Upper lobe of right lung (tissue), 1 donor: ENCODE measurements at regions of chr17 and their contacts with region 1.

Region 1: DNA sequence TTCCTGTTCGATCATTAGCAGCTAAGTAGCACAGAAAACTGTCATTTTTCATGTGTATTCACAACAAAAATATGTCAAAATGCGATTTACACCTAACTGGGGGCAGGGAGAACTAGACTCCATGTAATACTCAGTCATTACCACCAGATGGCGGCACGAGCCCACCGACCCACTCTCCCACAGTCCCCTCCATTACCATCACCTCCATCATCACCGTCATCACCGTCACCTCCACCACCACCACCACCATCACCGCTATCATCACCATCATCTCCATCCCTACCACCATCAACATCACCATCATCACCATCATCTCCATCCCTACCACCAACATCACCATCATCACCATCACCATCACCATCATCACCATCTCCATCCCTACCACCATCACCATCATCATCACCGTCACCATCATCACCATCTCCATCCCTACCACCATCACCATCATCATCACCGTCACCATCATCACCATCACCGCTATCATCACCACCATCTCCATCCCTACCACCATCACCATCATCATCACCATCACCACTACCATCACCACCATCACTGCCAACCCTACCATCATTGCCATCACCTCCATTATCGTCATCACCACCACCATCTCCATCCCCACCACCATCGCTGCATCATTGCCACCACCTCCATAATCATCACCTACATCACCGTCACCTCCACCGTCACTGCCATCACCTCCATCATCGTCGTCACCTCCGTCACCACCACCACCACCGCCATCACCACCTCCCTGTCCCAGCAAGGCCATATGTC is 14.4 kb downstream of the NDUFAF8 start:
- DNase-seq: no peak
- ATAC-seq: peak; percentile 62
- H3K4me3 ChIP-seq: no peak overlapping the region
- H3K27ac ChIP-seq: no peak overlapping the region
- H3K4me1 ChIP-seq: peaks cover 14% of the 10 kb centered on the region
- H3K27me3 ChIP-seq: no peaks in the 10 kb centered on the region
- CTCF ChIP-seq: peak; percentile 77

Region 2: GRCh38 chr17:81315129-81315884 is 61.8 kb after region 1 on chr17:
- intact Hi-C with region 1: no loop called
- DNase-seq: no peak
- ATAC-seq: no peak
- H3K4me3 ChIP-seq: no peak overlapping the region
- H3K27ac ChIP-seq: no peak overlapping the region
- H3K4me1 ChIP-seq: peaks cover under 1% of the 10 kb centered on the region
- H3K27me3 ChIP-seq: no peaks in the 10 kb centered on the region
- CTCF ChIP-seq: no peak

Region 3: GRCh38 chr17:81484195-81484979 is 230.8 kb after region 1 on chr17:
- intact Hi-C with region 1: loop called (anchors 10 kb)
- DNase-seq: peak; percentile 95
- ATAC-seq: peak; percentile 90
- H3K4me3 ChIP-seq: peak overlapping the region; percentile 39
- H3K27ac ChIP-seq: no peak overlapping the region
- H3K4me1 ChIP-seq: peaks cover 23% of the 10 kb centered on the region
- H3K27me3 ChIP-seq: no peaks in the 10 kb centered on the region
- CTCF ChIP-seq: peak; percentile 99

Region 4: GRCh38 chr17:81579821-81580321 is 326.3 kb after region 1 on chr17:
- intact Hi-C with region 1: loop called (anchors 10 kb)
- DNase-seq: no peak
- ATAC-seq: no peak
- H3K4me3 ChIP-seq: no peak overlapping the region
- H3K27ac ChIP-seq: no peak overlapping the region
- H3K4me1 ChIP-seq: no peaks in the 10 kb centered on the region
- H3K27me3 ChIP-seq: no peaks in the 10 kb centered on the region
- CTCF ChIP-seq: no peak